Ascending aorta (tissue), 2 donors: ENCODE measurements at regions of chr1 and their contacts with region 1.

Region 1: DNA sequence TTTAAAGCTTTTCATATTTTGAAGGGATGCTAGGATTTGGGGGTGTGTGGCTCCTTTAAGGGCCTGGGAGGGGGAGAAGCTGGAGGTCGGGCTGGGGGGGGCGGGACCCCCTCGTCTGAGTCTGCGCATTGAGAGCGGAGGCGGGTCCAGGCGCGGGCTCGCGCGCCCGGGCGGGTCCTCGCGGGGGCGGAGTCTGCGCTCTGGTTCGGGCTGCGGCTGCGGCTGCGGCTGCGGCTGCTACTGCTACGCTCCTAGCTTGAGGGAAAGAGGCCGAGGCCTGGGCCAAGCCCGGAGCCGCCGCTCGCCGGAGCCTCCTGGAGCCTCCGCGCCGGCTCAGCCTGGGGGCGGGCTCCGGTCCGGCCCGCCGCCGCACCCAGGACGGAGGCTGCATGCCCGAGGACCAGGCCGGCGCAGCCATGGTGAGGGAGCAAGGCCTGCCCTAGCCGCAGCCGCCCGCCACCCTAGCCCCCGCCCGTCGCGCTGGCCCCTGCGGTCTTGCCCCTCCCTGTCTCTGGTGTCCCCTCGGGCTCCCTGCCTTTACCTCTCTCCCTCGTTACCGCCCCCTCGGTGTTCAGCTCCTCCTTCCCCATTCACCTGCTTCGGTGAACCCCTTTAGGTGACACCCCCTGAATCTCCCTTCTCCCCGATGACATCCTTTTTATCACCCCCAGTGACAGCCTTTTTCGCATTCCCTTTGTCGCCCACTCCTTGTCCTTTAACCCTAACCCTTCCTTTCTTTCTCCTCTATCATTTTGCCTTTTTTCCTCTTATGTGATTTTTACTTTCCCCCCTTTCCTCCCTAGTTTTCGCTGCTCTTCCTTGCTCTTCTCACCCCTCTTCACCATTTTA is at the start of gene ZYG11B:
- DNase-seq: peak; percentile 38 to 92
- H3K4me3 ChIP-seq: peak within 1 kb of the TSS; percentile 90 to 91
- H3K27ac ChIP-seq: peak within 1 kb of the TSS; percentile 69 to 82
- H3K4me1 ChIP-seq: peaks cover 7 to 8% of the 10 kb centered on the region in 2 donors
- H3K27me3 ChIP-seq: no peaks in the 10 kb centered on the region
- CTCF ChIP-seq: no peak
- total RNA-seq, gene ZYG11B: 17.5 TPM

Region 2: GRCh38 chr1:52702886-52703787 is 23.4 kb before region 1 on chr1:
- intact Hi-C with region 1: loop called (anchors 1 kb)
- DNase-seq: peak; percentile 85 to 95
- H3K4me3 ChIP-seq: peak overlapping the region; percentile 59
- H3K27ac ChIP-seq: peak overlapping the region; percentile 70 to 74
- H3K4me1 ChIP-seq: peaks cover 0 to 3% of the 10 kb centered on the region in 2 donors
- H3K27me3 ChIP-seq: no peaks in the 10 kb centered on the region
- CTCF ChIP-seq: no peak

Region 3: GRCh38 chr1:52927212-52928014 is 200.9 kb after region 1 on chr1 and contains the start of gene SCP2:
- intact Hi-C with region 1: loop called (anchors 10 kb)
- DNase-seq: peak; percentile 33 to 91
- H3K4me3 ChIP-seq: peak within 1 kb of the TSS; percentile 50 to 73
- H3K27ac ChIP-seq: peak within 1 kb of the TSS; percentile 72 to 75
- H3K4me1 ChIP-seq: peaks cover 0 to 8% of the 10 kb centered on the region in 2 donors
- H3K27me3 ChIP-seq: no peaks in the 10 kb centered on the region
- CTCF ChIP-seq: no peak
- total RNA-seq, gene SCP2: 26.3 TPM

Region 4: GRCh38 chr1:53145942-53146708 is 419.6 kb after region 1 on chr1:
- intact Hi-C with region 1: no loop called
- DNase-seq: peak in 1 of 2 donors; percentile 78
- H3K4me3 ChIP-seq: no peak overlapping the region
- H3K27ac ChIP-seq: peak overlapping the region; percentile 53 to 65
- H3K4me1 ChIP-seq: no peaks in the 10 kb centered on the region
- H3K27me3 ChIP-seq: no peaks in the 10 kb centered on the region
- CTCF ChIP-seq: no peak